B cell (primary cell): ENCODE measurements at regions of chr4 and their contacts with region 1.

Region 1: GRCh38 chr4:113618205-113618604 is 143.3 kb downstream of the CAMK2D start:
- DNase-seq: peak; percentile 25
- ATAC-seq: peak; percentile 81
- H3K4me3 ChIP-seq: peak overlapping the region in 1 of 5 experiments; percentile 18
- H3K4me3 Mint-ChIP-seq: no peak overlapping the region
- H3K27ac ChIP-seq: peak overlapping the region; percentile 43 to 75
- H3K27ac Mint-ChIP-seq: no peak overlapping the region
- H3K4me1 ChIP-seq: peaks cover 45 to 63% of the 10 kb centered on the region in 2 donors
- H3K4me1 Mint-ChIP-seq: peaks cover 51% of the 10 kb centered on the region
- H3K27me3 ChIP-seq: no peaks in the 10 kb centered on the region
- H3K27me3 Mint-ChIP-seq: no peaks in the 10 kb centered on the region
- CTCF ChIP-seq: no peak

Region 2: GRCh38 chr4:112370466-112370865 is 1247.7 kb before region 1 on chr4:
- CTCF ChIA-PET with region 1: no interaction called
- POLR2A ChIA-PET with region 1: no interaction called
- intact Hi-C with region 1: no loop called
- DNase-seq: no peak
- ATAC-seq: no peak
- H3K4me3 ChIP-seq: no peak overlapping the region
- H3K4me3 Mint-ChIP-seq: no peak overlapping the region
- H3K27ac ChIP-seq: no peak overlapping the region
- H3K27ac Mint-ChIP-seq: no peak overlapping the region
- H3K4me1 ChIP-seq: no peaks in the 10 kb centered on the region
- H3K4me1 Mint-ChIP-seq: no peaks in the 10 kb centered on the region
- H3K27me3 ChIP-seq: no peaks in the 10 kb centered on the region
- H3K27me3 Mint-ChIP-seq: no peaks in the 10 kb centered on the region
- CTCF ChIP-seq: no peak

Region 3: GRCh38 chr4:113607998-113608397 is 10.2 kb before region 1 on chr4:
- CTCF ChIA-PET with region 1: no interaction called
- POLR2A ChIA-PET with region 1: no interaction called
- intact Hi-C with region 1: loop called (anchors 1 kb)
- DNase-seq: no peak
- ATAC-seq: no peak
- H3K4me3 ChIP-seq: no peak overlapping the region
- H3K4me3 Mint-ChIP-seq: peak overlapping the region; percentile 3
- H3K27ac ChIP-seq: no peak overlapping the region
- H3K27ac Mint-ChIP-seq: no peak overlapping the region
- H3K4me1 ChIP-seq: peaks cover 26 to 42% of the 10 kb centered on the region in 2 donors
- H3K4me1 Mint-ChIP-seq: peaks cover 67% of the 10 kb centered on the region
- H3K27me3 ChIP-seq: no peaks in the 10 kb centered on the region
- H3K27me3 Mint-ChIP-seq: no peaks in the 10 kb centered on the region
- CTCF ChIP-seq: no peak

Region 4: DNA sequence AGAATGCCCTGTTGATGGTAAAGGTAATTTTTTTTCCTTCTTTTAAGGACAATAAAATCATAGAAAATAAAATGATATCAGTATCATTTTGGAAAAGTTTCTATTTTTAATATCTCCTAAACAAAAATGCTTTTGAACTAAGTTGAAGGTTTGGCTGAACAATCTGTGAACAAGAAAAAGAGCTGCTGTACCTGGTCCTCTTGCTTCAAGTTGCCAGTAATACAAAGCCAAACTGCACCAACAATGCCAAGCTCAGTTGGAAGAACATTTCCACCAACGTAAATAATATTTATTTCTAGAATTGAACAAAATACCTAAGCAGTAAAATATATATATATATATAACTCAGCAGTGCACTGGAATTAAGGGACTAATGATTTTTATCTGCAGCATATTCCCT is 10.5 kb after region 1 on chr4:
- CTCF ChIA-PET with region 1: no interaction called
- POLR2A ChIA-PET with region 1: no interaction called
- intact Hi-C with region 1: no loop called
- DNase-seq: no peak
- ATAC-seq: no peak
- H3K4me3 ChIP-seq: no peak overlapping the region
- H3K4me3 Mint-ChIP-seq: no peak overlapping the region
- H3K27ac ChIP-seq: no peak overlapping the region
- H3K27ac Mint-ChIP-seq: no peak overlapping the region
- H3K4me1 ChIP-seq: peaks cover 3 to 22% of the 10 kb centered on the region in 2 donors
- H3K4me1 Mint-ChIP-seq: peaks cover 64% of the 10 kb centered on the region
- H3K27me3 ChIP-seq: no peaks in the 10 kb centered on the region
- H3K27me3 Mint-ChIP-seq: no peaks in the 10 kb centered on the region
- CTCF ChIP-seq: no peak